ENCODE measurements at regions of chr17 and their contacts with region 1.

Region 1: DNA sequence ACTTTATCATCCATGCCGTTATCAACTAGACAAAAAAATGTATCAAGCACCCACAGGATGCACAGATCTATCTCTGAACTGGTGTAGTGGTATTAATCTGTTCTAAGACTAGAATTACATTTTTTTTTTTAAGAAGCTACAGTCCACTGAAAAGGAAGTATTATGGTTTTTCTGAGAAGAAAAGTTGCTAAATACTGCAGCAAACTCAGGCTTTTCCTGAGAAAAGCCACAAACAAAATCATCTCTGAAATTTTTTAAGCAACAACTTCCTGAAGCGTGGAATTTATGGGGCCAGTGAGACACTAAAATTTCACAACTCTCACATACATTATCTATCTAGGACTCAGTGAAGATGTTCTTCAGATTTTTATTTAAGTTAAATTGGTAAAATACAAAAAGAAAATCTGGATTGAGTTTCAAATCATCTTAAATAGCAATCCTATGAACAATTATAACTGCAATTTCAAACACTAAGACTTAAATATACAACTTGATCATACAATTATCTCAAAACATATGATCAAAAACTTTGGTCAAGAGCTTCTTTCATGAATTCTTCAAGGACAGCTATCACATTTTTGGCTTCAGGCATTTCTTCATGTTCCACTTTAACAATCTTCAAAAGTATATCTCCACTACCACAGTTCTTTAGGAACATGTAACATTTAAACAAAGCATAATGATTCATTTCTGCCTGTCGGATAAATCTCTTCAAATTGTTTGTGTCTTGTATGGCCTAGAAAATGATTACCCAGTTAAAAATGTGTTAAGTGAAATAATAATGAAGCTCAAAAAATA is 10.5 kb downstream of the C17orf75 start:
- DNase-seq: no peak
- H3K4me3 Mint-ChIP-seq: peak overlapping the region; percentile 49
- H3K27ac Mint-ChIP-seq: peak overlapping the region; percentile 92
- H3K4me1 Mint-ChIP-seq: peaks cover 57% of the 10 kb centered on the region
- H3K27me3 Mint-ChIP-seq: no peaks in the 10 kb centered on the region

Region 2: GRCh38 chr17:32191306-32191705 is 140.1 kb before region 1 on chr17:
- CTCF ChIA-PET with region 1: no interaction called
- POLR2A ChIA-PET with region 1: no interaction called
- DNase-seq: no peak
- H3K4me3 Mint-ChIP-seq: no peak overlapping the region
- H3K27ac Mint-ChIP-seq: no peak overlapping the region
- H3K4me1 Mint-ChIP-seq: no peaks in the 10 kb centered on the region
- H3K27me3 Mint-ChIP-seq: no peaks in the 10 kb centered on the region

Region 3: DNA sequence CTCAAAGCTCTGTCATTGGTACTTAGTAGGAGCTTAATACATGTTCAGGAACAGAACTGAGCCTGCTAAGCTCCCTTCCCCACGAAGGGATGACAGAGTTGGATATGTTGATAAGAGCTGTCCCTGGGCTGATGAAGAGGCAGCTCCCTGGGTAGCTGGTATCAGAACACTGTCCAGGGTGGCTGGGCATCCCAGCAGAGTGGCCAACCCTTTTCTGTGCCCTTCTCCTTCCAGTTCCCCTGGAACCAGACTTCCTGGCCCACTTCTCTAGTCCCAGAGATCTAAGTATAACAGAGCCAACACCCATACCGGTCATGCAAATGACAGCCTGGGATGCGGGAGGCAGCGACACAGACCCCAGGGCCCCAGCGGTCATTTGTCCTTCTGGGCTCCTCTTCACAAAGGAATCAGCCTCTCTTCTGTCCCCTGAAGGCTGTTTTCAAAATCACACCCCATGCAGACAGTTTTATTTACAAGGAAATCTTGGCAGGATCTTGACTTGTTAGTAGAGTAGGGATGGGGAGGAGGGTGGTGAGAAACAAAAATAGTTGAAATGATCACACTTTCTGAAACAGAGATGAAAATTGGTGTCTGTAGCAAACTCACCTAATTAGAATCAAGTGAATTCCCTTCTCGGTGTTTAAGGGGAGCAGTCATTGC is 67.2 kb before region 1 on chr17:
- CTCF ChIA-PET with region 1: no interaction called
- POLR2A ChIA-PET with region 1: no interaction called
- DNase-seq: no peak
- H3K4me3 Mint-ChIP-seq: peak overlapping the region; percentile 12
- H3K27ac Mint-ChIP-seq: no peak overlapping the region
- H3K4me1 Mint-ChIP-seq: peaks cover 18% of the 10 kb centered on the region
- H3K27me3 Mint-ChIP-seq: peaks cover 77% of the 10 kb centered on the region

Region 4: DNA sequence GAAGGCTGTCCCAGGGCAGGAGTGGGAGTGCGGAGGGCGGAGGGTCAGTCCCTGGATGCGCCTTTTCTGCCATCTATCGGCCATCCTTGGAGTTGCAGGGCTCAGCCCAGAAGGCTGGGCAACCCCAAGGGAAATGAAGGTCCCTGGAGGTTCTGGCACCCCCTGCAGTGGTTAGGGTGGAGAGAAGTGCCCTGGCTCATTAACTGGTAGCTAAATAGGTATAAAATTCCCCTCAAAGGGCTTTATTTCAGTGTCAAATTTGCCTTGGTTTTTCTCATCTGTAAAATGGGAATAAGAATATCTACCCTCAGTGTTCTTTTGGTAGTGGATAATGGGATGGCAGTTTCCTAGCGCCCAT is 11.9 kb before region 1 on chr17:
- CTCF ChIA-PET with region 1: interaction called, 30 read pairs
- POLR2A ChIA-PET with region 1: interaction called, 9 read pairs
- DNase-seq: peak; percentile 80
- H3K4me3 Mint-ChIP-seq: peak overlapping the region; percentile 60
- H3K27ac Mint-ChIP-seq: no peak overlapping the region
- H3K4me1 Mint-ChIP-seq: peaks cover 37% of the 10 kb centered on the region
- H3K27me3 Mint-ChIP-seq: peaks cover 11% of the 10 kb centered on the region

Region 5: DNA sequence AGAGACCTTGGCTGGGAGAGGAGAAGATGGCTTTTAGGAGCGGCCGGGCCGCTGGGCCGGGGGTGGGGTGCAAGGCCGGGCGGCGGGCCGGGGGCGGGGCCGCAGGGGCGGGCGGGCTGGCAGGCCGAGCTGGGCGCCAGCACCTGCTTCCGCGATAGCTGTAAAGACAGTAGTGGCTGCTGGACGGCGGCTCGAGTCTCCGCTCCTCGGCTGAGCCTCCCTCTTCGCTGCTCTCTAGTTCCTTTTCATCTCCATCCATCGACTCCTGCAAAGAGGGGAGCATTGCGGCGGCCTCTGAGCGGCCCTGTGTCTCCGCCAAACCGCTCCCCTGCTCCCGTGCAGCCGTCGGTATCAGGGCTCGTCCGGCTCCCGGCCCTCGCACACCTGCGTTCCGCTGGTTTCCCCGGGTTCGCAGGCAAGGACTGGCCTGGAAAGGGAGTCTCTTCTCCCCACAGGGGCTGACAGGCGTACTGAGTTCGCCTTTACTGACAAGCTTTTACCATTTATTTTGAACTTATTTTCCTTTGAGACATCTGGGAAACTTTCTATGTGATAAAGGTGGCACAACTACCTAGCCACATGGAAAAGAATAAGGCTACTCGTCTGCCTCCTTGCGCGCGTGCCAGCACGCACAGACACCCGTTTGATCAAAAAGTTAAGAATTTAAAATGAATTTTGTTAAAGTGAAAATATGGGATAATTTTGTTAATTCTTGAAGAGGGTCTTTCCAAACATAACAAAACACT is 10.6 kb after region 1 on chr17 and contains the start of gene C17orf75:
- CTCF ChIA-PET with region 1: interaction called, 34 read pairs
- POLR2A ChIA-PET with region 1: interaction called, 44 read pairs
- DNase-seq: peak; percentile 82
- H3K4me3 Mint-ChIP-seq: peak within 1 kb of the TSS; percentile 95
- H3K27ac Mint-ChIP-seq: peak within 1 kb of the TSS; percentile 93
- H3K4me1 Mint-ChIP-seq: peaks cover 36% of the 10 kb centered on the region
- H3K27me3 Mint-ChIP-seq: no peaks in the 10 kb centered on the region
- total RNA-seq, gene C17orf75: 32.1 to 35.1 TPM

Region 6: DNA sequence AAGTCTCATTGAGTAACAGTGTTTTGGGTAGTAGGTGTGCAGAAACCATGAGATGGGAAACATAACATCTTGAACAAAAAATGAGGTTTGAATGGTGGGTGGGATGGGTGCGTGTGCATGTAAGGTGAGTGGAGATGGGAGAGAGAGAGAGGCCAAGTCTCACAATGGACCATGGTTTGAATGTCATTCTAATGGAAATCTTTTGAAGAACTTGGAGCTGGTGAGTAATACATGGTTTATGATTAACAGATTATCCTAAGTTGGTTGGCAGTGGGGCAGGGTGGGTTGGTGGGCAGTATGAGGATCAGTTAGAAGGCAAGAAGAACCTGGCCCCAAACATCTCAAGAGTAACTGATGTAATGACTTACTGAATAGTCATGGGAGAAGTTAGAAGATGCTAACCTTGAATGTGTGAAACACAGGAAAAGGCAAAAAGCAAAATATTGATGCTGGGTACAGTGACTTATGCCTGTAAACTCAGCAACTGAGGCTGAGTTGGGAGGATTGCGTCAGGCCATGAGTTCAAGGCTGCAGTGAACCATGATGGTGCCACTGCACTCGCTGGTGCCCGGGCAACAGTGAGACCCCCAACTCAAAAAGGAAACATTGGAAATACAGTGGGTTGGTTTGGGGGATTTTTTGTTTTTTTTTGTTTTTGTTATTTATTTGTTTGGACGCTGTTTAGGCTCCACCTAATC is 51.2 kb after region 1 on chr17:
- CTCF ChIA-PET with region 1: no interaction called
- POLR2A ChIA-PET with region 1: no interaction called
- DNase-seq: no peak
- H3K4me3 Mint-ChIP-seq: no peak overlapping the region
- H3K27ac Mint-ChIP-seq: no peak overlapping the region
- H3K4me1 Mint-ChIP-seq: peaks cover 6% of the 10 kb centered on the region
- H3K27me3 Mint-ChIP-seq: no peaks in the 10 kb centered on the region